Lower leg skin (tissue), 4 donors: ENCODE measurements at regions of chr10 and their contacts with region 1.

Region 1: GRCh38 chr10:53697038-53697437 is 924.5 kb upstream of the MBL2 start:
- DNase-seq: no peak
- H3K4me3 ChIP-seq: no peak overlapping the region
- CTCF ChIP-seq: no peak
- POLR2A ChIP-seq: no peak

Region 2: DNA sequence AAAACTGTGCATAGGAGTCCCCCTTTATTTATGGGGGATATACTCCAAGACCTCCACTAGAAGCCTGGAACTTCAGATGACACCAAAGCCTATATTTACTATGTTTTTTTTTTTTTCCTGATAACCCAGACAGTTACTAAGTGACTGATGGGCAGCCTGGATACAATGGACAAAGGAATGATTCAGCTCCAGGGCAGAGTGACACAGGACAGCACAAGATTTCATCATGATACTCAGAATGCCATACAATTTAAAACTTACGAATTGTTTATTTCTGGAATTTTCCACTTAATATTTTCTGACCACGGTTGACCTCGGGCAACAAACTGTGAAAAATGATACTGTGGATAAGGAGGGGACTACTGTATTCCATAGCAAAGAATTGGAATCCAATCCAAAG is 260.4 kb after region 1 on chr10:
- intact Hi-C with region 1: loop called (anchors 10 kb)
- DNase-seq: no peak
- H3K4me3 ChIP-seq: no peak overlapping the region
- CTCF ChIP-seq: no peak
- POLR2A ChIP-seq: no peak